ENCODE measurements at regions of chr14 and their contacts with region 1.

Region 1: DNA sequence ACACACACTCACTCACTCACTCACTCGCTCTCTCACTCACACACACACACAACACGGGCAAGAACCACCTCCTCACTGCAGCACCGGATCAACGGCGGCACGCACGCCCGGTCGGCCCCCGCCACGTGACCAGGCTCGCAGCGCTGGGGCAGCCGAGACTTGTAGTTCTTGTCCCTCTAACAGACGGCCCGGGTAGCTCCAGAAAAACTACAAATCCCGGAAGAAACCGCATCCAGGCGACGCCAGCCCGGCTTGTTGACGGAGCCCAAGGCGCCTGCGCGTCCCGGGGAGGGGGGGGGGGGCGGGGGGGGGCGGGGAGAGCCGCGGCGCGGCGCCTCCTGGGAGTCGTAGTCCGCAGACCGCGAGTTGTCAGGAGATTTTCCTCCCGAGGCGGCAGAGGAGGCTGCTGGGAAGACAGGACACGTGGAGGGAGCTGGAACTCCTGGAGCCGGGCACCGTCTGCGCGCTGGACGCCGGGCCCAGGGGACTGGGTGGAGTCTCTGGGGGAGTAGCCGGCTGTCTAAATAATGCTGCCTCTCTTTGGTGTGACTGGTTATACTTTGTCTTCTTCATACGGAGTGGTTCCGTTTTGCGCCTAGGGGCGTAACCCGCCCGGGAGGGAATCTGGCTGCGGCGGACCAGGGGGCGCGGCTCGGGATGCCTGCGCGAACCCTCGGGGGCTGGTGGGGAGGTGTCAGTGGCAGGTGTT is at the start of gene MAX:
- DNase-seq: peak; percentile 92
- H3K4me3 ChIP-seq: peak within 1 kb of the TSS; percentile 95 to 100 (median 98)
- H3K27ac ChIP-seq: peak within 1 kb of the TSS; percentile 95 to 99 (median 97)
- H3K4me1 ChIP-seq: peaks cover 11 to 45% (median 30%) of the 10 kb centered on the region in 3 donors
- H3K27me3 ChIP-seq: no peaks in the 10 kb centered on the region
- CTCF ChIP-seq: peak in 1 of 6 experiments; percentile 4
- POLR2A ChIP-seq: peak in 3 of 4 donors; percentile 69 to 89 (median 85)
- total RNA-seq, gene MAX: 45.3 to 88.7 (median 46.3) TPM

Region 2: GRCh38 chr14:63972323-63972932 is 1130.2 kb before region 1 on chr14:
- intact Hi-C with region 1: no loop called
- DNase-seq: no peak
- H3K4me3 ChIP-seq: no peak overlapping the region
- H3K27ac ChIP-seq: no peak overlapping the region
- H3K4me1 ChIP-seq: no peaks in the 10 kb centered on the region
- H3K27me3 ChIP-seq: no peaks in the 10 kb centered on the region
- CTCF ChIP-seq: no peak
- POLR2A ChIP-seq: no peak

Region 3: DNA sequence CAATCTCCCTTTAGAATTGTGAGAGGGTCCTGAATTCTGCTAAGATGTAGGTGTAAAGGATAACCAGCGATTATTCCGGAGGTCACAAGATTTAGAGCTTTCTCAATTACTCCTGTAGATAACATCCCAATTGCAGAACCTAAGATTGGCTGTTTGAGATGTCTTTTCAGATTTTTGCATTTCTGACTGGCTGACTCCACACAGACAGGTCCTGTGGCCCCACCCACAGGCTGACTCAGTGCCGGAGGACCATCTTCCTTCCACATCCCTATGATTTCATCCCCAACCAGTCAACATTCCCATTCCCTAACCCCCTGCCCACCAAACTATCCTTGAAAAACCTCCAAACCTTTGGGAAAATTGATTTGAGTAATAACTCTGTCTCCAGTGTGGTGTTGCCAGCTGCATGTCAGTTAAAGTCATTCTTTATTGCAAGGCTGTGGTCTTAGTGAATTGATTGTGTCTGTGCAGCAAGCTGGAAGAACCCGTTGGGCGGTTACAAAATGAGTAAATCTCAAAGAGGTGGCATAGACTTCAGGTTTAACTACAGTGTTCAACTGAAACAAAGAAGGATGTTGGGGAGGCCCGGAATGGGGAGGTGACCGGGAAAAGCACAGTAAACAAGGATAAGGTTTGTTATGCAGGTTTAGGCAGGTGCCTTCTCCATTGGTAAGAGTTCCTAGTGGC is 105.3 kb before region 1 on chr14:
- intact Hi-C with region 1: loop called (anchors 10 kb)
- DNase-seq: no peak
- H3K4me3 ChIP-seq: peak overlapping the region in 2 of 4 donors; percentile 0 to 27
- H3K27ac ChIP-seq: peak overlapping the region; percentile 64 to 86 (median 82)
- H3K4me1 ChIP-seq: peaks cover 10 to 64% (median 25%) of the 10 kb centered on the region in 3 donors
- H3K27me3 ChIP-seq: no peaks in the 10 kb centered on the region
- CTCF ChIP-seq: no peak
- POLR2A ChIP-seq: no peak

Region 4: DNA sequence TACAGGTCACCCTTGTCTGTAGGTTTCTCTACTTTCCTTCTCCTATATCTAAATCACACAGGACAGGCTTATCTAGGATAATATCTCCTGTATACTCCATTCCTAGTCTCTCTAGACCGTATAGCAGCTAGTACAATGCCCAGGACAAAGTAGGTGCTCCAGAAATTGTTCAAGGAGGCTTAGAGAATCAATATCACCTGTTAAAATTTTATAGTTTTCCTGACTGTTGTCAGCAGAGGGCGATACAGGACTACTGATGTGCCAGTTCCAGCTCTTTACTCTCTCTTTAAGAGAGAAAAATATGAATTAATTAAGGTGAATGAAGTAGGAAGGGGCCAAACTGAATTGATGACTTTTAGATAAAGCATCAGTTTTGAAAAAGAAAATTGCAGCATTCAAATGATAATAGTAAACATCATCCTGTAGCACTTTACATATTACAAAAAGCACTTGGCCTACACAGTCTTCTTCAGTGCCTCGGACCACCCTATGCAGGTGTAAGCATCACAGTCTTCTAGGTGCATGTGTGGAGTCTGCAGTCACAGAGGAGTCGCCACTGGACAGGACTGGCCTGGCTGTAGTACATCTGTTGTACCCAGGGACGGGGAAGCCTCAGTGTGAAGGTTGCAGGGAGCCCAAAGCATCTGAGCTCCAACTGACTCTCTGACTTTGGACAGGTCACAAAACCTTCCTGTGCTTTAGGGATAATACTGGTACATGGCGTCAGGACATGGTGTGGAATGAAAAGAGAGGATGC is 61.7 kb after region 1 on chr14:
- intact Hi-C with region 1: no loop called
- DNase-seq: no peak
- H3K4me3 ChIP-seq: no peak overlapping the region
- H3K27ac ChIP-seq: no peak overlapping the region
- H3K4me1 ChIP-seq: peaks cover 0 to 3% (median 0%) of the 10 kb centered on the region in 3 donors
- H3K27me3 ChIP-seq: no peaks in the 10 kb centered on the region
- CTCF ChIP-seq: peak; percentile 47 to 69 (median 56)
- POLR2A ChIP-seq: no peak

Region 5: GRCh38 chr14:65267856-65268255 is 165.3 kb after region 1 on chr14:
- intact Hi-C with region 1: no loop called
- DNase-seq: no peak
- H3K4me3 ChIP-seq: no peak overlapping the region
- H3K27ac ChIP-seq: no peak overlapping the region
- H3K4me1 ChIP-seq: peaks cover 0 to 11% (median 0%) of the 10 kb centered on the region in 3 donors
- H3K27me3 ChIP-seq: no peaks in the 10 kb centered on the region
- CTCF ChIP-seq: no peak
- POLR2A ChIP-seq: no peak

Measured in esophagus squamous epithelium (tissue), 5 donors.